Heart right ventricle (tissue), 16 donors: ENCODE measurements at regions of chr15 and their contacts with region 1.

Region 1: DNA sequence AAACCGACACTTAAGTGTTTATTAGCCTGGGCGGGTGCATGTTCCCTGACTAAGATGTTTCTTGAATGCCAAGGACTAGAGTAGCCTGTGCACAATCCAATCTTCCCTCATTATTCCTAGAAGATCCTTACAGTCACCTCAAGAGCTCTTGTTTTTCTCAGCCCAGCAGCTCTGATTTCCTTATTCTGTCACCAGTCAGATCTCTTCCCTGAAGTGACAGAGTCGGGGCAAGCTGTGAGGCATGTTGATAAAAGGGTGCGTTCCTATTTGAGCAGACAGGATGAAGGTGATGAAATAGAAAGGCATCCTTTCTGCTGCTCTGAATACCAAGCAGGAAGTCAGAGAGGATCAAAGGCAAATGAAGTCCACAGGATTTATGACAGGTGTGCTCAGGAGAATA is 125.6 kb upstream of the MCTP2 start:
- DNase-seq: no peak
- ATAC-seq: no peak
- H3K4me3 ChIP-seq: no peak overlapping the region
- H3K27ac ChIP-seq: no peak overlapping the region
- H3K4me1 ChIP-seq: no peaks in the 10 kb centered on the region
- H3K27me3 ChIP-seq: peaks cover 0 to 13% (median 0%) of the 10 kb centered on the region in 7 donors
- CTCF ChIP-seq: no peak

Region 2: GRCh38 chr15:93048759-93049161 is 1057.0 kb before region 1 on chr15:
- intact Hi-C with region 1: loop called in 1 of 10 experiments (anchors 5 kb)
- DNase-seq: no peak
- ATAC-seq: no peak
- H3K4me3 ChIP-seq: no peak overlapping the region
- H3K27ac ChIP-seq: no peak overlapping the region
- H3K4me1 ChIP-seq: peaks cover 0 to 19% (median 0%) of the 10 kb centered on the region in 9 donors
- H3K27me3 ChIP-seq: no peaks in the 10 kb centered on the region
- CTCF ChIP-seq: no peak

Region 3: DNA sequence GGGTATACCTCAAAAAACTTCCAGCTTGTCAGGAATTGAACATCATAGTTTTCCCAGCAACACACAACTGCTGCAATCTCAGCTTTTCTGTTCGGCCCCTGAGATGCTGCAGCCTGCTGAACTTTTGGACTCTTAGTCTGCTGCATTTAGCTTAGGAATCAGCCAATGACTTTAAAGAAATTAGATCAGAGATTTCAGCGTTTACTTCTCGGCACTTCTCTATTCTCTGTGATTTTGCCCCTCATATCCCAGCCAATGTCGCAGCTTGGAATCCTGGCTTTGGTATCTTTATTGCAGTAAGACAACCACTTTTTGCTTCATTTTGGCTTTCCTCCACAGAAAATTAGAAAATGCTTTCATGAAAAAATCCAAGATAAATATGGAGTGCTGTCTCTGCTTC is 39.3 kb after region 1 on chr15:
- intact Hi-C with region 1: no loop called
- DNase-seq: no peak
- ATAC-seq: no peak
- H3K4me3 ChIP-seq: no peak overlapping the region
- H3K27ac ChIP-seq: no peak overlapping the region
- H3K4me1 ChIP-seq: no peaks in the 10 kb centered on the region
- H3K27me3 ChIP-seq: peaks cover 0 to 4% (median 0%) of the 10 kb centered on the region in 7 donors
- CTCF ChIP-seq: no peak